Activated CD4-positive, alpha-beta T cell treated with anti-CD3 and anti-CD28 coated beads, Interleukin-2, amount 10 ng/mL, durations not matched to agents 24 days and 14 days (primary cell): ENCODE measurements at regions of chr15 and their contacts with region 1.

Region 1: GRCh38 chr15:90648137-90649070 is 68.7 kb upstream of the BLM start:
- DNase-seq: peak; percentile 93
- H3K4me3 Mint-ChIP-seq: peak overlapping the region; percentile 70
- H3K27ac Mint-ChIP-seq: peak overlapping the region; percentile 91
- H3K4me1 Mint-ChIP-seq: peaks cover 39% of the 10 kb centered on the region
- H3K27me3 Mint-ChIP-seq: no peaks in the 10 kb centered on the region

Region 2: DNA sequence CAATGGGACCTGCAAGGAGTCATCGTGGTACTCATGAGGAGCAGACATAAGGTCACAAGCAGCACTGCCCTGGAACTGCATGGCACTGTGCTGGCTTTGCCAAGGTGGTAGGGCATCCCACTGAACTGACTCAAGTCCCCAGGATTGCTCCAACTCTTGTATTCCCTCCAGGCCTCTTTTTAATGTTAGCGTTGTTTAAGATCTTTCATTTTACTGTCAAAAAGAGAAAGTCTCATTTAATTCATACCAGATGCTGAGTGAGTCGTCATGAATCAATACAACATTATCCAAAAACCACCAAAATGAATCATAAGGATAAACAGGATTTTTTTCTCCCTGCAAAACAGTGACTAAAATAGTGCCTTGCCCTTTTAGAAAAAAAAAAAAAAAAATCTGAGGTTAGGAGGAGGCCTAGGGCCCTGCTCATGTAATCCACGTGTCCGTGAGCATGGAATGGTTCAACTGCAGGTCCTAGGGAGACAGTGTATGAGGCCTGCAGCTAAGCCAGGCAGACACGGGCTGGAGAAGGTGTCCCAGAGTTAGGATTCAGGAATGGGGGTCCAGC is 32.0 kb after region 1 on chr15:
- intact Hi-C with region 1: loop called (anchors 1 kb)
- DNase-seq: no peak
- H3K4me3 Mint-ChIP-seq: no peak overlapping the region
- H3K27ac Mint-ChIP-seq: peak overlapping the region; percentile 41
- H3K4me1 Mint-ChIP-seq: peaks cover 51% of the 10 kb centered on the region
- H3K27me3 Mint-ChIP-seq: no peaks in the 10 kb centered on the region

Region 3: DNA sequence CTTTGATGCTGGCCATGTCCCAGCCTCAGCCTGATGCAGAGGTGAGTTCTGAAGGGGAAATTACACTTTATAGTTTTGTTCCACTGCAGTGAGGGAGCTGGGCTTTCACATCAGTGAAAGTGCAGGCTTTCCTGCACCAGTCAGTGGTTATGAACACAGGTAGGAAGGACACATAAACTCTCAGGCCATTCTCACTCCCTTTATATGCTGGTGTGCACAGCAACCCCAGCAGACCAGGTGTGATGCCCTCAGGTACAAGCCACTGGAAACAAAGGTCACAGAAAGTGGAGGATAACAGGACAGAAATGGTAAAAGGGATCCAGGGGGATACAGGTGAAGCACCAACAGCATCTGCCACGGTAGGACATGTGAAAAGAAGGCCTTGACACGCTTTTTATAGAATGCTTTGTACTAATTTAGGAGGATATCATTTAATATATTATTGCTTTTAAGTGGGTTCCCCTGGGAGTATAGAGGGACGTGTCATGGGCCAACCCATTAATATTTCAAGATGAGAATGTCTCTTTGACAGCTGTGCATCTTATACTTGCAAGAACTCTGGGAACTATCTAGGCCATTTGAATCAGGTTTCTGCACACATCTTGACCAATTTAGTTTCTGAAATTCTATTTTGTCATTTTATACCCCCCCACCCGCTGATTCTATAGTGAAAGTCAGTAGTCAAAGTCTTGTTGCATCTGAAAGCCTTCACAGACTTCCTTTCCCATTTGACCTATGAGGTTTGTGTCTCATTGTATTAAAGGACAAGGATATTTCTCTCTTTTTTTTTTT is 43.8 kb after region 1 on chr15:
- intact Hi-C with region 1: loop called (anchors 1 kb)
- DNase-seq: no peak
- H3K4me3 Mint-ChIP-seq: no peak overlapping the region
- H3K27ac Mint-ChIP-seq: peak overlapping the region; percentile 11
- H3K4me1 Mint-ChIP-seq: peaks cover 42% of the 10 kb centered on the region
- H3K27me3 Mint-ChIP-seq: no peaks in the 10 kb centered on the region

Region 4: GRCh38 chr15:90729261-90729660 is 80.9 kb after region 1 on chr15:
- intact Hi-C with region 1: no loop called
- DNase-seq: peak; percentile 35
- H3K4me3 Mint-ChIP-seq: no peak overlapping the region
- H3K27ac Mint-ChIP-seq: no peak overlapping the region
- H3K4me1 Mint-ChIP-seq: peaks cover 24% of the 10 kb centered on the region
- H3K27me3 Mint-ChIP-seq: no peaks in the 10 kb centered on the region

Region 5: GRCh38 chr15:90818251-90819210 is 170.1 kb after region 1 on chr15:
- intact Hi-C with region 1: loop called (anchors 5 kb)
- DNase-seq: peak; percentile 86
- H3K4me3 Mint-ChIP-seq: peak overlapping the region; percentile 80
- H3K27ac Mint-ChIP-seq: peak overlapping the region; percentile 99
- H3K4me1 Mint-ChIP-seq: peaks cover 69% of the 10 kb centered on the region
- H3K27me3 Mint-ChIP-seq: no peaks in the 10 kb centered on the region

Region 6: DNA sequence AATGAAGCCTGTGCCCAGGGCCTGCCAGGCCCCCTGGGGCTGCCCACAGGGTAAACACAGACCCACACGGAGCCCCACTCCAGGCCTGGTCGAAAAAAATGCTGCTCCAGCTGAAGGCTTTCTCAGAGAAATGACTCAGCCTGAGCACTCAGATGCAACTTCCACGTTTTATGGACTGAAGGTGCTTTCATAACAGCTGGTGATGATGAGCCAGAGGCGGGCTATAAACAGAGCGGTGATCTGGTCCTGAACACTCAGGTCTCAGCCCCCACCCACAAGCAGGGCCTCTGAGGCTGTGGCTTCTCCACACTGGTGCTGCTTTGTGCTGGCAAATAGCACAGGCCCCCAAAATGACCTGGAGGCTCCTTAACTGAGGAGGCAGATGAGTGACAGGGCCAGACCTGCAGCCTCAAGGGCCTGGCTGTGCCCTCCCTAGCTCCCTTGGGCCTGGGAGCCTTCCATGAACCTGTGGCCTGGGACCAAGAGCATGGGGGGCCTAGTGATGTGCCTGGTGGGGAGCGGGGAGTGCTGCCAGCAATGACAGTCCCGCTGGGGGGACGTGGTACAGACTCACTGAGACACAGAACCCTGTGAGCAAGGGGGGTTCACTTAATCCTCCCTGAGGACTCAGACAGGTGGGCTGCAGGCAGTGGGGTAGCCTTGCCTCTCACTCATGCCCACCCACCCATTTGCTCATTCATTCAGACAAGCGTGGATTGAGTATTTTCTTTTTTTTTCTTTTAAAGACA is 197.0 kb after region 1 on chr15:
- intact Hi-C with region 1: no loop called
- DNase-seq: peak; percentile 87
- H3K4me3 Mint-ChIP-seq: peak overlapping the region; percentile 52
- H3K27ac Mint-ChIP-seq: peak overlapping the region; percentile 89
- H3K4me1 Mint-ChIP-seq: peaks cover 42% of the 10 kb centered on the region
- H3K27me3 Mint-ChIP-seq: no peaks in the 10 kb centered on the region

Region 7: DNA sequence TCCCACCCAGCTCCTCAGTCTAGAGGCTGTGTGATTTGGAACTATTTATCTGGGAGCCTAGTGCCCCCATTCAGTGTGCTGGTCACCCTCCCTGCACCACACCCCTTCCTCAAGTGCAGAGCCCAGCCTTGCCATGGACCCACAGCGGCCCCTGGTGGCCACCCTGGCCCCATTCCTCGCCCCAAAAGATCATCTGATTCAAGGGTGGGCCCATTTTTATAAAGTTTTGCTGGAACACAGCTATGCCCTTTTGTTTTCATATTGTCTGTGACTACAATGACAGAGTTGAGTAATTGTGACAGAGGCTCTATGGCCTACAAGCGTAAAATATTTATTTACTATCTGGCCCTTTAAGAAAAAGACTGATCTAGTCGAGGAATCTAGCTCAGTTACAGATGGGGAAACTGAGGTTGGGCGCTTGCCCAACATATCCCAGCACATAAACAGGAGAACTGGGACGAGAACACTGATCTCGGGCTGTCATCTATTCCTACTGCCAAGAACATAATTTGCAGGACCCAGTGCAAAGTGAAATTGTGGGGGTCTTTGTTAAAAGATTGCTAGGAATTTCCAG is 237.7 kb after region 1 on chr15:
- intact Hi-C with region 1: loop called (anchors 1 kb)
- DNase-seq: peak; percentile 94
- H3K4me3 Mint-ChIP-seq: peak overlapping the region; percentile 55
- H3K27ac Mint-ChIP-seq: peak overlapping the region; percentile 81
- H3K4me1 Mint-ChIP-seq: peaks cover 38% of the 10 kb centered on the region
- H3K27me3 Mint-ChIP-seq: no peaks in the 10 kb centered on the region